A673 (cell line): ENCODE measurements at regions of chr4 and their contacts with region 1.

Region 1: DNA sequence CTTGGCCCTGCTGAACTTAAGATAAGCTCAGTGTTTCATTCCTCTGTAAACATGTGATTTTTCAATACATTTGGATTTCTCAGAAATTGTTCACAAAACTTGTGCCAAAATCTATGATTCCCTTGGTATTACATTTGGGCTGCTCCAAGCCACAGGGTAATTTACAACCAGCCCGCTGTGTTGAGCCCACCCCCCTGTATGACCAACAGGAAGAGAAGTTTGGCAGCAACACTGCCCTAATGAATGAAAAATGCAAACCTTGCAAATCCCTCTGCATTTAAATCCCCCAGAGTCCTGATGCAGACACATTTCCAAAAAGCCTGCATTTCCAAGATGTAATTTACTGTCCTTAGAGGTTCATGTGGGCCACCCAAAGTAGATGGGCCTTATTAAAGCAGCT is 34.1 kb upstream of the GAB1 start:
- DNase-seq: peak; percentile 86
- H3K4me3 ChIP-seq: no peak overlapping the region
- H3K27ac ChIP-seq: peak overlapping the region; percentile 3
- H3K4me1 ChIP-seq: peaks cover 21% of the 10 kb centered on the region
- H3K27me3 ChIP-seq: no peaks in the 10 kb centered on the region
- CTCF ChIP-seq: no peak

Region 2: GRCh38 chr4:141346144-141346543 is 1956.4 kb before region 1 on chr4:
- CTCF ChIA-PET with region 1: no interaction called
- POLR2A ChIA-PET with region 1: no interaction called
- intact Hi-C with region 1: no loop called
- DNase-seq: peak; percentile 65
- H3K4me3 ChIP-seq: no peak overlapping the region
- H3K27ac ChIP-seq: no peak overlapping the region
- H3K4me1 ChIP-seq: peaks cover 16% of the 10 kb centered on the region
- H3K27me3 ChIP-seq: peaks cover 26% of the 10 kb centered on the region
- CTCF ChIP-seq: peak; percentile 63

Region 3: GRCh38 chr4:143358923-143359643 is 56.5 kb after region 1 on chr4:
- CTCF ChIA-PET with region 1: no interaction called
- POLR2A ChIA-PET with region 1: no interaction called
- intact Hi-C with region 1: loop called (anchors 2 kb)
- DNase-seq: peak; percentile 96
- H3K4me3 ChIP-seq: peak overlapping the region; percentile 21
- H3K27ac ChIP-seq: peak overlapping the region; percentile 96
- H3K4me1 ChIP-seq: peaks cover 85% of the 10 kb centered on the region
- H3K27me3 ChIP-seq: no peaks in the 10 kb centered on the region
- CTCF ChIP-seq: no peak